ENCODE measurements at regions of chr7 and their contacts with region 1.

Region 1: GRCh38 chr7:29748286-29749108 is 57.8 kb upstream of the WIPF3 start:
- DNase-seq: peak; percentile 44
- H3K4me3 ChIP-seq: no peak overlapping the region
- H3K27ac ChIP-seq: no peak overlapping the region
- H3K4me1 ChIP-seq: peaks cover 5% of the 10 kb centered on the region
- H3K27me3 ChIP-seq: peaks cover 0 to 2% of the 10 kb centered on the region in 2 experiments
- CTCF ChIP-seq: peak; percentile 33 to 36
- POLR2A ChIP-seq: no peak

Region 2: GRCh38 chr7:29163854-29164253 is 584.6 kb before region 1 on chr7:
- CTCF ChIA-PET with region 1: no interaction called
- POLR2A ChIA-PET with region 1: no interaction called
- dilution Hi-C with region 1: no loop called
- intact Hi-C with region 1: no loop called
- DNase-seq: no peak
- H3K4me3 ChIP-seq: no peak overlapping the region
- H3K27ac ChIP-seq: no peak overlapping the region
- H3K4me1 ChIP-seq: no peaks in the 10 kb centered on the region
- H3K27me3 ChIP-seq: peaks cover 6 to 10% of the 10 kb centered on the region in 2 experiments
- CTCF ChIP-seq: no peak
- POLR2A ChIP-seq: no peak

Region 3: DNA sequence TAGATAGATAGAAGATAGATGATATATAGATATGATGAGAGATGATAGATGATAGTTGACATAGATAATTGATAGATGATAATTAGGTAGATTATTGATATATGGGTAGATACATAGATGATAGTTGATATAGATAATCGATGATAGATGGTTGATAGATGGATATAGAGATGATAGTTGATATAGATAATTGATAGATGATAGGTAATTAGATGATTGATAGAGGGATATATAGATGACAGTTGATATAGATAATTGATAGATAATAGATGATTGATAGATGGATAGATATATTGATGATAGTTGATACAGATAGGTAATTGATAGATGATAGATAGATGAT is 112.5 kb before region 1 on chr7:
- CTCF ChIA-PET with region 1: interaction called, 21 read pairs
- POLR2A ChIA-PET with region 1: no interaction called
- dilution Hi-C with region 1: no loop called
- intact Hi-C with region 1: no loop called
- DNase-seq: no peak
- H3K4me3 ChIP-seq: no peak overlapping the region
- H3K27ac ChIP-seq: no peak overlapping the region
- H3K4me1 ChIP-seq: no peaks in the 10 kb centered on the region
- H3K27me3 ChIP-seq: no peaks in the 10 kb centered on the region
- CTCF ChIP-seq: no peak
- POLR2A ChIP-seq: no peak

Region 4: DNA sequence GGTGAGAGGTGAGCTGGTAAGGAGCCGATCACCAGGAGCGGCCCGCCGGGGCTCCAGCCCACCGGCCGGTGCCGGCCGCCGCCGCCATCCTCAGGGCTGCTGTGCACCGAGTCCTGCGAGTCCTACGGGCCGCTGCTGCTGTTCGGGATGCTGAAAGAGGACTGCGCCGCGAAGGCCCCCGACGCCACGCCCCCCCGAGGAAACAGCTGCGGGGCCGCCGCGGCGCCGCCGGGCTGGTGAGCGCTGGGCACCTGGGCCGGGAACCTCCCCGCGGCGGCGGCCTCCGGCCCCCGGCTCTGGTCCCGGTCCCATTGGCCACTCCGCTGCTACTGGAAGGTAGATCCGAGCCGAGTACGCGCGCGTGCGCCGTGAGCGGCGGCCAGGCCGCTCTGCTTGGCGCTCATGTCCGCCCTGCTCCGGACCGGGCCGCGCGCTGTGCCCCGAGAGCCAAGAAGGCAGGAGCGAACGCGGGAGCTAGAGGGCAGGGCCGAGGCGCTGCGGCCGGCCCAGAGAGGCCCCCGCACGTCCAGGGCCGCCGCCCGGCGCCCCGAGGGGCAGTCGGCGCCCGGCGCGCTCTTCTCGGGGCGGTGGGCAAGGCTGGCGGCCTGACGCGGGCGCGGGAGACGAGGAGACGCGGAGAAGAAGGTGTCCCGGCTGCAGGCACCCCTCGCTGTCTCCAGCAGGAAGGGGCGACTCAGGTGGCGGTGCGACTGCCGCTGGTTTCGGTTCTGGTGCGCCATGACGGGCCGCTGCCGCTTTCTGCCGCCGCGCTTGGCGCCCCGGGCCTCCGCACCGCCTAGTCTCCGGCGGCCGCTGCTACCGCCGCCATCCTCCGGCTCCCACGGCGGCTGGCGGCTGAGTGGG is 63.5 kb before region 1 on chr7:
- CTCF ChIA-PET with region 1: interaction called, 3 read pairs
- POLR2A ChIA-PET with region 1: no interaction called
- dilution Hi-C with region 1: no loop called
- intact Hi-C with region 1: loop called (anchors 2 kb)
- DNase-seq: peak; percentile 77
- H3K4me3 ChIP-seq: peak overlapping the region; percentile 52 to 68 (median 56)
- H3K27ac ChIP-seq: peak overlapping the region; percentile 58
- H3K4me1 ChIP-seq: no peaks in the 10 kb centered on the region
- H3K27me3 ChIP-seq: no peaks in the 10 kb centered on the region
- CTCF ChIP-seq: no peak
- POLR2A ChIP-seq: no peak

Region 5: DNA sequence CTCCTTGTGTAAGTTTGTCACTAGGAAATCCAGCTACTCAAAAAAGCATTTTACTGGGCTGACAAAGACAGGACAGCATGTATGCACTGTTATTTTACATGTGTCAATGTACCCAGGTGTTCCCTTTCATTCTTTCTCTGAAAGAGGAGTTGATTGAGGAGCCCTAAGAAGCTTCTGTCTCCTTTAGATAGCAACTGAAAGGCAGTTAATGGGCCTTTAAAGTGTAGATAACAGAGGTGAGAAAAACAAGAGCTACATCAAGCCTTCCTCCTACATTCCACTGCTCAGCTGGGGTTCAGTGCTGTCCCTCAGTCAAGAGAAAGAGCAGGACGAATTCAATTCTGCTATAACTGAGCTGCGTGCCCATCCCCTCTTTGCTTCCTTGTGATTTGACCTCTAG is 45.0 kb after region 1 on chr7:
- CTCF ChIA-PET with region 1: no interaction called
- POLR2A ChIA-PET with region 1: no interaction called
- dilution Hi-C with region 1: no loop called
- intact Hi-C with region 1: no loop called
- DNase-seq: no peak
- H3K4me3 ChIP-seq: no peak overlapping the region
- H3K27ac ChIP-seq: no peak overlapping the region
- H3K4me1 ChIP-seq: no peaks in the 10 kb centered on the region
- H3K27me3 ChIP-seq: peaks cover 11 to 12% of the 10 kb centered on the region in 2 experiments
- CTCF ChIP-seq: no peak
- POLR2A ChIP-seq: no peak

Region 6: GRCh38 chr7:29871787-29872396 is 123.4 kb after region 1 on chr7:
- CTCF ChIA-PET with region 1: interaction called, 9 read pairs
- POLR2A ChIA-PET with region 1: no interaction called
- dilution Hi-C with region 1: no loop called
- intact Hi-C with region 1: loop called (anchors 2 kb)
- DNase-seq: peak; percentile 57
- H3K4me3 ChIP-seq: no peak overlapping the region
- H3K27ac ChIP-seq: no peak overlapping the region
- H3K4me1 ChIP-seq: no peaks in the 10 kb centered on the region
- H3K27me3 ChIP-seq: peaks cover 11% of the 10 kb centered on the region in 2 experiments
- CTCF ChIP-seq: no peak
- POLR2A ChIP-seq: no peak

Region 7: DNA sequence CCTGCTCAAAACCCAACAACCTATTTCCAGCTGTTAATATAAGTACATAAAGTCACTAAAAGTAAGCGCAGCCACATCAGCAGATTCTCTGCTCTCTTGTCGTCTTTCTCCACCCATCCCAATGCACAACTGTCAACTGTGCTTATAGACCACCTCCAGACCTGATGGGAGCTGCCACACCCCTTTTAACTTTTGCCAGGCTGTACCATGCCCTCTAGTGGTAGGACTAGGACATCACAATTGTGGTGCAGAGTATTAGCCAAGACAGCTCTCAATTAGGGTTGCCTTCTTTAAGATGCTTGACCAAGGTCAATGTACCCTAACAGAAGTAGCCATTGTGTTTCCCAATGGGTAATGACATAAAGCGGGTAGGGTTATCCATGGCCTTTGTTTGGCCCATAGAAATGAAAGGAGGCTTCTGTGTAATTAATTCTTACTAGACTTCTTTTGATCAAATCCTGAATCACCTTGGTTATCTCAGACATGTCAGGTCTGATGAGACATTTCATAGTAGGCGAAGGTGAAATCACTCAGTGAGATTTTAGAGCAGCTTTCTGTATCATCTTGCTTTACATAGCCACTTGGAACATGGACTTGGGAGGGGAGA is 173.0 kb after region 1 on chr7:
- CTCF ChIA-PET with region 1: interaction called, 97 read pairs
- POLR2A ChIA-PET with region 1: no interaction called
- dilution Hi-C with region 1: no loop called
- intact Hi-C with region 1: loop called (anchors 1 kb)
- DNase-seq: peak; percentile 76
- H3K4me3 ChIP-seq: no peak overlapping the region
- H3K27ac ChIP-seq: no peak overlapping the region
- H3K4me1 ChIP-seq: no peaks in the 10 kb centered on the region
- H3K27me3 ChIP-seq: no peaks in the 10 kb centered on the region
- CTCF ChIP-seq: peak; percentile 84 to 89
- POLR2A ChIP-seq: no peak

Measured in endothelial cell of umbilical vein (primary cell).